ENCODE measurements at regions of chr18 and their contacts with region 1.

Region 1: GRCh38 chr18:22933206-22933957 is at the start of gene RBBP8:
- DNase-seq: peak; percentile 85
- H3K4me3 Mint-ChIP-seq: peak within 1 kb of the TSS; percentile 95
- H3K27ac Mint-ChIP-seq: peak within 1 kb of the TSS; percentile 76
- H3K4me1 Mint-ChIP-seq: peaks cover 18% of the 10 kb centered on the region
- H3K27me3 Mint-ChIP-seq: no peaks in the 10 kb centered on the region
- CTCF ChIP-seq: no peak
- total RNA-seq, gene RBBP8: 42.0 and 59.7 TPM in 2 replicates

Region 2: DNA sequence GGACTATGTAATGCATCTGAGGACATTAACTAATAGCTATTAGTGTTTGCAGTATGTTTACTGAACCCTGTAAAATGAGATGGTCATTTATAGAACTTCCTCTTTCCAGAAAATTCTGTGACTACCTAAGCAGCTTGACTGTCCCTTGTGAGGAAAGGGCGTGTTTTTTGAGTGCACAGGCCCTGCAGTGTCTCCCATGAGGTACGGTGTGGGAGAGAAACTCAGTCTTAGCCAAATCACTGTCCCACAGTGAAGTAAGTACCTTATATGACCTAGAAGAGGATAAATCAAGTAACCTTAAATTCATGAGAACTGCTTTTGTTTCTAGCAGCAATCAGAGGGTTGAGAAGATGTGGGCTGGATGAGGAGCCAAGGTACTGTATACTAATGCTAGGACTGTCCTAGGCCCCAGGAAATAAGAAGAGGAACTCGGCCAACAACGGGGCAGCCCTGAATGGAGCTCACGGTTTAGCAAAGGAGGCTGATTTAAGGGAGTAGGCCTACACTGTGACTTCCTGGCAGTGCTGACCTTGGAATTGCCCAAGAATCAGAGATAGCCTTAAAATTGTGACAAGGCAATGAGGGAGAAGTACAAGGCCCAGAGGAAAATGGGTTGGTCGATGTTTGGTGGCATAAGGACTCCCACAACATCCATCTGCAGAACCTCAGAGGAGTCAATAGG is 412.2 kb before region 1 on chr18:
- CTCF ChIA-PET with region 1: no interaction called
- POLR2A ChIA-PET with region 1: no interaction called
- intact Hi-C with region 1: no loop called
- DNase-seq: no peak
- H3K4me3 Mint-ChIP-seq: no peak overlapping the region
- H3K27ac Mint-ChIP-seq: no peak overlapping the region
- H3K4me1 Mint-ChIP-seq: no peaks in the 10 kb centered on the region
- H3K27me3 Mint-ChIP-seq: no peaks in the 10 kb centered on the region
- CTCF ChIP-seq: no peak

Region 3: GRCh38 chr18:22822024-22822423 is 111.4 kb before region 1 on chr18:
- CTCF ChIA-PET with region 1: interaction called, 3 read pairs
- POLR2A ChIA-PET with region 1: interaction called, 13 read pairs
- intact Hi-C with region 1: loop called (anchors 5 kb)
- DNase-seq: peak; percentile 89
- H3K4me3 Mint-ChIP-seq: no peak overlapping the region
- H3K27ac Mint-ChIP-seq: no peak overlapping the region
- H3K4me1 Mint-ChIP-seq: peaks cover 20% of the 10 kb centered on the region
- H3K27me3 Mint-ChIP-seq: no peaks in the 10 kb centered on the region
- CTCF ChIP-seq: no peak

Region 4: DNA sequence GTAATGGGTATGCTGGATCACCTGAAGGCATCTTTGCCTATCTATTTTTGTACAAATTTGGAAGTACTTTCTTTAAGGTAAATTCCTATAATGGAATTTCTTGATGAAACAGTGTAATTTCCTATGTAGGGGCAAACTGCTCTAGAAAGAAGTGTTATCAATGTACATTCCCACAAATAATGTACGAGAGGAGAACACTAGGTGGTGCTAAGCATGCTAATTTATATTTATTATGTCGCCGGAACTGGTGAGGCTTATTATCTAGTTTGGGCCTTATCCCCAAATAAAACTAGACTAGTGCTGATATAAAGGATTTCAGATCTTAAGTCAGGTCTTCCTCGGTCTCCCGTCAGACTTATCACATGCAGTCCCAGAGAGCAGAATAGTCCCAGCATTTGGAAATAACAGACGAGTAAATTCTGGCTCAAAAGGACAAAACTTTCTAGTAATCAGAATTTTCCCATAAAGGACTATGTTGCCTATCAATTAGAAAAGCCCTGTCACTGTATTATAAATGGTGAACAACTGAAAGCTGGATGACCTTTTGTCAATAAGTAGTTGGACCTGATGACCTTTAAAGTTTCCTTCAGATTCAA is 87.2 kb before region 1 on chr18:
- CTCF ChIA-PET with region 1: interaction called, 12 read pairs
- POLR2A ChIA-PET with region 1: interaction called, 76 read pairs
- intact Hi-C with region 1: loop called (anchors 2 kb)
- DNase-seq: peak; percentile 54
- H3K4me3 Mint-ChIP-seq: no peak overlapping the region
- H3K27ac Mint-ChIP-seq: peak overlapping the region; percentile 71
- H3K4me1 Mint-ChIP-seq: peaks cover 62% of the 10 kb centered on the region
- H3K27me3 Mint-ChIP-seq: no peaks in the 10 kb centered on the region
- CTCF ChIP-seq: peak; percentile 29

Region 5: GRCh38 chr18:22913857-22914256 is 19.5 kb before region 1 on chr18:
- CTCF ChIA-PET with region 1: interaction called, 27 read pairs
- POLR2A ChIA-PET with region 1: interaction called, 14 read pairs
- intact Hi-C with region 1: no loop called
- DNase-seq: no peak
- H3K4me3 Mint-ChIP-seq: no peak overlapping the region
- H3K27ac Mint-ChIP-seq: no peak overlapping the region
- H3K4me1 Mint-ChIP-seq: peaks cover 12% of the 10 kb centered on the region
- H3K27me3 Mint-ChIP-seq: no peaks in the 10 kb centered on the region
- CTCF ChIP-seq: no peak

Region 6: GRCh38 chr18:22977847-22978701 is 44.7 kb after region 1 on chr18:
- CTCF ChIA-PET with region 1: interaction called, 20 read pairs
- POLR2A ChIA-PET with region 1: interaction called, 34 read pairs
- intact Hi-C with region 1: loop called (anchors 1 kb)
- DNase-seq: peak; percentile 86
- H3K4me3 Mint-ChIP-seq: peak overlapping the region; percentile 68
- H3K27ac Mint-ChIP-seq: peak overlapping the region; percentile 98
- H3K4me1 Mint-ChIP-seq: peaks cover 24% of the 10 kb centered on the region
- H3K27me3 Mint-ChIP-seq: no peaks in the 10 kb centered on the region
- CTCF ChIP-seq: no peak

Measured in MCF 10A (cell line).